Posterior cingulate gyrus (tissue), 11 donors: ENCODE measurements at regions of chr3 and their contacts with region 1.

Region 1: DNA sequence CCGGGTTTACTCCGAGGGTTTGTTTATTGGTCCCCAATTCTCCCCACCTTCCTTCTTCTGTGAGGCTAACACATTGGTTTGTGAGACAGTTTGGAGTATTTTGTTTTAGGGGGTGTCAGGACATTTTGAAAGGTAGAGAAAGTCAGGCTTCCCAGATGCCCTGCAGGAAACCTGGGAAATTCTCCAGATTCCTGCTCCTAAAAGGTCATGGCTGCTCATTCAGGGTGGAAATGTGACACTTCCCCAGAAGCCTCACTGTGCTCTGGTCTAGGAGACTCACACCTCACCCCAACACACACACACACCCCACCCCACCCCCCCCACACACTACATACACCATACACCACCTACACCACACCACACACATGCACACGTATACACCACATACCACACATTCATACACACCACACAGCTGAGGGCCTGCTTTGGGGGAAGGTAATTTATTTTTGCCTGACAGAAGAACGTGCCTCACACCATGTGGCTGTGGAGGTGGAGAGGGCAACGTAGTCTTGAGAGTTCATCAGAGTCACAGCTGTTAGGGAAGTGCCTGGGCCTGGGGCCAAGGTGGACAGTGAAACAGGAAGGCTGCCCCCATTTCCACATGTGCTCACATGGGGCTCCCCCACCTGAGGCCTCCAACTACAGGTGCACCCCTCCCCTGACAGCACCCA is 40.4 kb upstream of the LIMD1 start:
- DNase-seq: no peak

Region 2: GRCh38 chr3:45593708-45594609 is 39.8 kb after region 1 on chr3:
- intact Hi-C with region 1: loop called (anchors 5 kb)
- DNase-seq: peak in 5 of 10 donors; percentile 45 to 92 (median 82)

Region 3: DNA sequence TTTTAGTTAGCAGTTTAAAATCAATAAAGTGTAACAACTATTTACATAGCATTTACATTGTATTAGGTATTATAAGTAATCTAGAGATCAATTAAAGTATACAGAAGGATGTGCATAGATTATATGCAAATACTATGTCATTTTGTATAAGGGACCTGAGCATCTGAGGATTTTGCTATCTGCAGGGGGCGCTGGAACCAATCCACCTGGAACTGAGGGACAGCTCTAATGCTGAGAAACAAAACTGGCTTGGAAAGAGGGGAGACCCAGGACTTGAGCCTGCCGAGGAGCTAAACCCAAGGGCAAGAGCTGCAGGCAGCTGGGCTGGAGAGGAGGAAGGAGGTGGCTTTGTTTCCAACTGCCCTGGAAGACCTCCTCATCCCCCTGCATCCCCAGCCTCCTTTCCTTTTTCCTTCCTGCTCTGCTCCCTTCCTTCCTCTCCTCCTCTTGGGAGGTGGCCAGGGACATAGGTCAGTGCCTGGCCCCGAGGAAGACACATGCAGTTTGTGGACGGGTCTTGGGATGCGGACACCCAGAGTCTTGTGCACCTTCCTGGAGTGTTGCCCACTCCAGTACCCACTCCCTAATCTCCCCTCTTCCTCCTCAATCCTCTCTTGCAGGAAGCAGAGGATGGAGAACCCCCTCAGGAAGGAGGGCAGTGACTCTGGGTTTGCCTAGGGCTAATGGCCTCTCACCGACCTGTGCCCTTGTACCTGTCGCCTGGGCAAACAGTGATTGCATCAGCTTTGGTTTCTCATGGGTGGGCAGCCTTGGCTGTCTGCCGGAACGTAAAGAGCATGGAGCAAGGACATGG is 942.8 kb after region 1 on chr3:
- intact Hi-C with region 1: no loop called
- DNase-seq: no peak